PC-9 (cell line): ENCODE measurements at regions of chr12 and their contacts with region 1.

Region 1: GRCh38 chr12:8780389-8780788 is 42.0 kb upstream of the A2ML1 start:
- DNase-seq: peak; percentile 20 to 46
- H3K4me3 ChIP-seq: no peak overlapping the region
- H3K27ac ChIP-seq: no peak overlapping the region
- H3K4me1 ChIP-seq: no peaks in the 10 kb centered on the region
- H3K27me3 ChIP-seq: no peaks in the 10 kb centered on the region
- CTCF ChIP-seq: peak; percentile 53; the same call in 1 of the 2 replicates

Region 2: DNA sequence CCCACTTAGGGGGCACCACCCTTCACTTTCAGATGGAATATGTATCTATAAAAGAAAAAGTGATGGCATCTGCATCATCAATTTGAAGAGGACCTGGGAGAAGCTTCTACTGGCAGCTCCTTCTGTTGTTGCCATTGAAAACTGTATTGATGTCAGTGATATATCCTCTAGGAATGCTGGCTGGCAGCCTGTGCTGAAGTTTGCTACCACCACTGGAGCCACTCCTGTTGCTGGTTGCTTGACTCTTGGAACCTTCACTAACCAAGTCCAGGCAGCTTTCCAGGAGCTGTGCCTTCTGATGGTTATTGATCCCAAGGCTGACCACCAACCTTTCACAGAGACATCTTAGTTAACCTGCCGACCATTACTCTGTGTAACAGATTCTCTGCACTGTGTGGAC is 37.9 kb before region 1 on chr12:
- CTCF ChIA-PET with region 1: no interaction called
- POLR2A ChIA-PET with region 1: no interaction called
- intact Hi-C with region 1: no loop called
- DNase-seq: peak; percentile 27 to 39
- H3K4me3 ChIP-seq: no peak overlapping the region
- H3K27ac ChIP-seq: no peak overlapping the region
- H3K4me1 ChIP-seq: no peaks in the 10 kb centered on the region
- H3K27me3 ChIP-seq: no peaks in the 10 kb centered on the region
- CTCF ChIP-seq: no peak

Region 3: DNA sequence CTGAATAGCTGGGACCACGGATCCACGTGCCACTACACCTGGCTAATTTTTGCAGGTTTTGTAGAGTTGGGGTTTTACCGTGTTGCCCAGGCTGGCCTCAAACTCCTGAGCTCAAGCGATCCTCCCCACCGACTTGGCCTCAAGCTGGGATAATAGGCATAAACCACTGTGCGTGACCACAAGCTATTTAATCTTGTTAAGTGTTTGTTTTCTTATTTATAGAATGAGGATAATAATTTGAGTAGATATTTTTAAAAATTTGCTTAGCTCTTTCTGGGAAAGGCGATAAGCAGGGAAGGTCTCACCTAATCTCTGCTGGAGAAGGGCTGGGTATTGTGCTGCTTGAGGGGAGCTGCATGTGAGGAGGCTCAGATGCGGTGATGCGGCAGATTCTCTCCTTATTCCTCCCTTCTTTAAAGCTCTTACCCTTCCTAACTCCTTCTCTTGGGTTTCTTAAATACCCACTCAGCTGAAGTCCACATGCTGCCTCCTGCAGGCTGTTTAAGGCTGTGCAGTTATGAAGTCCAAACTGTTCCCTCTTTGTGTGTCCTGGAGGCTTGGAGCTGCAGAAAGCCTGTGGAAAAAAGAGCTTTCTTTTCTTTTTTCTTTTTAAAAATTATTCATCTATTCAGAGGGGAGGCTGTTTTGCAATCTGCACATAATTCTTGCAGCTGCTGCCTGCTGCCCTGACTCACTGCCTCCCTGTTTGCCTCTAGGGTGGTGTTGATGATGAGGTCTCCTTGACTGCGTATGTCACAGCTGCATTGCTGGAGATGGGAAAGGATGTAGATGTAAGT is 80.0 kb after region 1 on chr12:
- CTCF ChIA-PET with region 1: interaction called, 3 read pairs
- POLR2A ChIA-PET with region 1: no interaction called
- intact Hi-C with region 1: loop called (anchors 1 kb)
- DNase-seq: peak; percentile 33 to 38
- H3K4me3 ChIP-seq: no peak overlapping the region
- H3K27ac ChIP-seq: no peak overlapping the region
- H3K4me1 ChIP-seq: no peaks in the 10 kb centered on the region
- H3K27me3 ChIP-seq: no peaks in the 10 kb centered on the region
- CTCF ChIP-seq: peak; percentile 72

Region 4: GRCh38 chr12:8890313-8891085 is 110.1 kb after region 1 on chr12:
- CTCF ChIA-PET with region 1: no interaction called
- POLR2A ChIA-PET with region 1: no interaction called
- intact Hi-C with region 1: loop called (anchors 1 kb)
- DNase-seq: peak in 1 of 2 experiments; percentile 63
- H3K4me3 ChIP-seq: peak overlapping the region; percentile 43; the same call in 1 of the 2 replicates
- H3K27ac ChIP-seq: no peak overlapping the region
- H3K4me1 ChIP-seq: 0 out of 2 replicates have a peak, but pooled peaks cover 3% of the 10 kb centered on the region
- H3K27me3 ChIP-seq: no peaks in the 10 kb centered on the region
- CTCF ChIP-seq: peak; percentile 95

Region 5: GRCh38 chr12:8905546-8905945 is 125.2 kb after region 1 on chr12:
- CTCF ChIA-PET with region 1: no interaction called
- POLR2A ChIA-PET with region 1: no interaction called
- intact Hi-C with region 1: no loop called
- DNase-seq: no peak
- H3K4me3 ChIP-seq: no peak overlapping the region
- H3K27ac ChIP-seq: no peak overlapping the region
- H3K4me1 ChIP-seq: peaks cover 3% of the 10 kb centered on the region
- H3K27me3 ChIP-seq: no peaks in the 10 kb centered on the region
- CTCF ChIP-seq: no peak

Region 6: GRCh38 chr12:8987163-8987562 is 206.8 kb after region 1 on chr12:
- CTCF ChIA-PET with region 1: no interaction called
- POLR2A ChIA-PET with region 1: no interaction called
- intact Hi-C with region 1: no loop called
- DNase-seq: no peak
- H3K4me3 ChIP-seq: no peak overlapping the region
- H3K27ac ChIP-seq: no peak overlapping the region
- H3K4me1 ChIP-seq: 0 out of 2 replicates have a peak, but pooled peaks cover 3% of the 10 kb centered on the region
- H3K27me3 ChIP-seq: no peaks in the 10 kb centered on the region
- CTCF ChIP-seq: no peak